H1 (cell line): ENCODE measurements at regions of chr11 and their contacts with region 1.

Region 1: DNA sequence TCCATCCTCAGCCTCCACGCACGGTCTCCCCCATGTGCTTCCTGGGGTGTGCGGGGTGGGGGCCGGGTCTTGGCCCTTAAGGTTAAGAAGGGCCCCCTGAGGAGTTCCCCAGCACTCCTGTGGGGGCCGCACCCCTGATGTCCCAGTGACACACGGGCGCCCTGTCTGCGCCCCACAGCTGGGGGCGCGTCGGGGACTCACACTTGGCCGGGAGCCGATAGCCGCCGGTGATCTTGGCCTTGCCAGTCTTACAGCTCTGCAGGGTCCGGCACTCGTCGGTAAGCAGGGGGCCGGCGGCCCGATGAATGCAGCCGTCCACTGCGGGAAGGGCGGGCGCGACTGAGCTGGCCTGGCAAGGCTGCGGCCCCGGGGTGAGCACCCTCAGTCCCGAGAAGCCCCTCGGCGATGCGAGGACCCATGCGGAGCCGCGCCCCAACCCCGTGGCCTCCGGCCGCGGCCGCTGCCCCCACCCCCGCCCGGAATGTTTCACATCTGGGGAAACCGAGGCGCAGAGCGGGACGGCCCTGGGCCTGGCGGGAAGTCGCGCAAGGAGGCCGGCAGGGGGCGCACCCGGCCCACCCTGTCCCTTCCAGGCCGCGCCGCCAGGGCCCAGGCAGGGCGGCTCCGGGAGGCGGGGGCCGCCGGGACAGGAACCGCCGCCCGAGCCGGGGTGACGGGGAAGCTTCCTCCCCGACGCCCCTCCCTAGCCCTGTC is 13.9 kb downstream of the OTUB1 start:
- DNase-seq: peak in 1 of 2 experiments; percentile 91
- H3K4me3 ChIP-seq: peak overlapping the region; percentile 14 to 61 (median 47)
- H3K27ac ChIP-seq: no peak overlapping the region
- H3K4me1 ChIP-seq: peaks cover 2 to 23% (median 12%) of the 10 kb centered on the region in 4 experiments; a peak in 6 of 7 replicates
- H3K27me3 ChIP-seq: peaks cover 5 to 36% (median 24%) of the 10 kb centered on the region in 4 experiments
- CTCF ChIP-seq: peak in 2 of 3 experiments; percentile 57 to 92; a peak in 3 of 4 replicates
- EP300 ChIP-seq: no peak
- POLR2A ChIP-seq: no peak
- RAD21 ChIP-seq: peak; percentile 69 to 84

Region 2: GRCh38 chr11:63931045-63931444 is 69.1 kb before region 1 on chr11:
- CTCF ChIA-PET with region 1: no interaction called
- POLR2A ChIA-PET with region 1: no interaction called
- DNase-seq: no peak
- H3K4me3 ChIP-seq: no peak overlapping the region
- H3K27ac ChIP-seq: no peak overlapping the region
- H3K4me1 ChIP-seq: peaks cover 0 to 4% (median 0%) of the 10 kb centered on the region in 4 experiments; a peak in 1 of 7 replicates
- H3K27me3 ChIP-seq: peaks cover 0 to 8% (median 5%) of the 10 kb centered on the region in 4 experiments; a peak in 3 of 7 replicates
- CTCF ChIP-seq: no peak
- EP300 ChIP-seq: no peak
- POLR2A ChIP-seq: no peak
- RAD21 ChIP-seq: no peak

Region 3: GRCh38 chr11:63961608-63962412 is 38.4 kb before region 1 on chr11:
- CTCF ChIA-PET with region 1: interaction called, 15 read pairs
- POLR2A ChIA-PET with region 1: interaction called, 3 read pairs
- DNase-seq: no peak
- H3K4me3 ChIP-seq: no peak overlapping the region
- H3K27ac ChIP-seq: no peak overlapping the region
- H3K4me1 ChIP-seq: no peaks in the 10 kb centered on the region; a peak in 1 of 7 replicates
- H3K27me3 ChIP-seq: peaks cover 0 to 10% (median 0%) of the 10 kb centered on the region in 4 experiments; a peak in 2 of 7 replicates
- CTCF ChIP-seq: no peak
- EP300 ChIP-seq: no peak
- POLR2A ChIP-seq: no peak
- RAD21 ChIP-seq: no peak

Region 4: DNA sequence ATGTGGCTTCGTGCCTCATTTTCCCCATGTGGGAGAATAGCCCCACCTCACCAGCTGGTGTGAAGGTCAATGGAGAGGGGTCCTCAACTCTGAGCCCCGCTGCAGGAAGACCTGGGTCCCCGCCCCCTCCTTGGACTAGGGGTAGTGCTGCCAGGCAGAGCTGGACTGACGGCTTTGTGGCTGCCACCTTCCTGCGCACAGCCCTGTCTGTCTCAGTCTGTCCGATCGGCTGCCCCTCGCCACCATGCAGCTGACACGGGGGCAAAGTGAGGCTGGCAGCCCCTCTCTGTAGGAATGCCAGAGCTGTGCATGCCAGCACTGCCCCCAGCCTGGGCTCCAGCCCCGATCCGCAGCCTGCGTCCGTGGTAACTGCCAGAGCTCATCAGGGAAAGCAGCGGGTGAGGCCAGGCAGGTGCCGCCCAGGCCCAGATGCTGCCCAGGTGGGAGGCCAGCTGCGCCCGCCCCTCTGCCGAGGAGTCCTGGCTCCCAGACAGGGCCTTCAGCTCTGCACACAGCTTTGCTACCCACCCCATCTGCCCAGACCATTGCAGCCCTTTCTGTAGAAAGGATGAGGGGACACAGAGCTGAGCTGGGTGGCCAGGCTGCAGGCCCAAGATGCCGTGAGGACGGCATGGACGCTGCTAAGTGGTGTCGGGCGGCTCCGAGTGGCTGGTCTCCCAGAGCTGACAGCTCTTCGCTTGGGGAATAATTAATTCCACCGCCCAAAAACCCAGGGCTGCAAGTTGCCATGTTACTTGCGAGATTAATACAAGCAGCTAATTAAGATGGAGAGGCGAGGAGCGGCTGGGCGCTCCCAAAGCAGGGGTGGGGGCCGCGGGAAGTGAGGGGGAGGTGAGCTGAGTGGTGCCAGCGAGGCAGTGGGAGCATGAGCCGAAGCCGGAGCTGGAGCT is 16.0 kb after region 1 on chr11:
- CTCF ChIA-PET with region 1: interaction called, 74 read pairs
- POLR2A ChIA-PET with region 1: interaction called, 8 read pairs
- DNase-seq: no peak
- H3K4me3 ChIP-seq: no peak overlapping the region
- H3K27ac ChIP-seq: no peak overlapping the region
- H3K4me1 ChIP-seq: peaks cover 0 to 13% (median 7%) of the 10 kb centered on the region in 4 experiments; a peak in 6 of 7 replicates
- H3K27me3 ChIP-seq: peaks cover 2 to 56% (median 32%) of the 10 kb centered on the region in 4 experiments
- CTCF ChIP-seq: no peak
- EP300 ChIP-seq: no peak
- POLR2A ChIP-seq: no peak
- RAD21 ChIP-seq: no peak

Region 5: GRCh38 chr11:64048042-64048854 is 48.1 kb after region 1 on chr11:
- CTCF ChIA-PET with region 1: interaction called, 11 read pairs
- POLR2A ChIA-PET with region 1: no interaction called
- DNase-seq: no peak
- H3K4me3 ChIP-seq: no peak overlapping the region
- H3K27ac ChIP-seq: no peak overlapping the region
- H3K4me1 ChIP-seq: peaks cover 2 to 10% (median 7%) of the 10 kb centered on the region in 4 experiments
- H3K27me3 ChIP-seq: peaks cover 1 to 68% (median 43%) of the 10 kb centered on the region in 4 experiments
- CTCF ChIP-seq: no peak
- EP300 ChIP-seq: no peak
- POLR2A ChIP-seq: no peak
- RAD21 ChIP-seq: no peak

Region 6: GRCh38 chr11:64141081-64141783 is 141.0 kb after region 1 on chr11:
- CTCF ChIA-PET with region 1: interaction called, 171 read pairs
- POLR2A ChIA-PET with region 1: interaction called, 3 read pairs
- DNase-seq: no peak
- H3K4me3 ChIP-seq: no peak overlapping the region
- H3K27ac ChIP-seq: no peak overlapping the region
- H3K4me1 ChIP-seq: no peaks in the 10 kb centered on the region; a peak in 3 of 7 replicates
- H3K27me3 ChIP-seq: peaks cover 0 to 40% (median 13%) of the 10 kb centered on the region in 4 experiments; a peak in 5 of 7 replicates
- CTCF ChIP-seq: no peak
- EP300 ChIP-seq: no peak
- POLR2A ChIP-seq: no peak
- RAD21 ChIP-seq: no peak

Region 7: DNA sequence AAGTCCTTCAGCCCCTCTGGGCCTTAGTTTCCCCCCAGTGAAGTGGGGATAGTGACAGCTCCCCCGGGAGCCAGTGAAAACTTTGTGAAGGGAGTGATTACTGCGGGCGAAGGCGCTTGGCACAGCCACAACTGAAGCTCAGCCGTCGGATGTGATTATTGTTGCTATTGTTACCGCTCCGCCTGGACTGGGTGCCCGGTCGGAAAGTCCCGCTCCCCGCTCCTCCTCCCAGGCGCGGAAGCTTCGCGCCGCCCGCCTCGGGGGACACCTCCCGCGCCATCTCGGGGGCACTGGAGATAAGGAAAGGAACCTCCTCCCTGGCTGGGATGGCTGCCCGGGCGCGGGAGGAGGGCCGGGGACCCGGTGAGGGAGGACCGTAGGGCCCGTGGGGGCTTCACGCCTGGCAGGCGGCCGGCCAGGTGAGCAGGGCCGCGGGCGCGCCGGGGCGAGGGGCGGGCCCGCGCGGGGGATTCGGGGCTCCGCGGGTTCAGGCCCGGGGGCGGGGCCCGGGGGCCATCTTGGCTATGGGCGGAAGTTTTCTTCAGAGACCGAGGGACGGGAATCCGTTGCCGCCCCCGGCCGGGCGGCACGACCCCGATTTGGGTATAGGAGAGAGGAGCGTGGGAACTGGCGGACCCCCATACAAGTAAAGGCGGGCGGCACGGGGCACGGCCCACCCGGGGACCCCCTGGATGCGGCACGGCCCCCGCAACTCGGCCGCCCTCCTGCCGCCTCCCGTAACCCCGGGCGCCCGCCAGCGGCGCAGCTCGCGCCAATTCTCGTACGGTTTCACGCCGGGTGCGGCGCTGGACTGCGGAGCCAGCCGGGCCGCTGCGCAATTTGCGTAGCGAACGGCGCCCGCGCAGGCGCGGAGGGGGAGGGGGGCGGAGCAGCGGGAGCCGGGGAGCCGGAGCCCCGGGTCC is 285.0 kb after region 1 on chr11 and contains the start of gene GPR137:
- CTCF ChIA-PET with region 1: no interaction called
- POLR2A ChIA-PET with region 1: no interaction called
- DNase-seq: peak in 1 of 2 experiments; percentile 98
- H3K4me3 ChIP-seq: peak within 1 kb of the TSS; percentile 49 to 70 (median 69)
- H3K27ac ChIP-seq: no peak within 1 kb of the TSS
- H3K4me1 ChIP-seq: peaks cover 0 to 8% (median 4%) of the 10 kb centered on the region in 4 experiments; a peak in 4 of 7 replicates
- H3K27me3 ChIP-seq: peaks cover 2 to 12% (median 11%) of the 10 kb centered on the region in 4 experiments; a peak in 6 of 7 replicates
- CTCF ChIP-seq: no peak
- EP300 ChIP-seq: no peak
- POLR2A ChIP-seq: no peak
- RAD21 ChIP-seq: no peak; a peak in 1 of 4 replicates
- total RNA-seq, gene GPR137: 36.8 and 37.8 TPM in 2 replicates